Activated naive CD4-positive, alpha-beta T cell treated with anti-CD3 and anti-CD28 coated beads for 36 hours (primary cell): ENCODE measurements at regions of chr5 and their contacts with region 1.

Region 1: DNA sequence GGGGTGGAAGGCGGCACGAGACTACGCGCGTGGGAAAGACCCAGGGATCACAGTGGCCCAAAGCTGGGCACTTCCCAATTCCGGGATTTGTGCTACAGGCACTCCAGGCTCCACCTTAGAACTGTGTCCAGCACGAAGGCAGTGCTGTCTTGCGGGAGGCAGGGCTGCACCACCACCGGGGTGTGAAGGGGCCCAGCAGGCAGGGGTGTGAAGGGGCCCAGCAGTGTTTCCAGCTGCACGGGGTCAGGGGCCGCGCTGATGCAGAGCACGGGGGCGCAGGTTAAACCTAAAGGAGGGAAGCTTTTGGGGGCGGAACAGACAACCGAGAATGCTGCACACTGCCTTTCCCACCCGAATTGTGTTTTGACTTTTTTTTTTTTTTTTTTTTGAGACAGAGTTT is 1.1 kb upstream of the PDCD6 start:
- DNase-seq: no peak
- H3K4me3 Mint-ChIP-seq: peak overlapping the region; percentile 88
- H3K27ac Mint-ChIP-seq: peak overlapping the region; percentile 69
- H3K4me1 Mint-ChIP-seq: peaks cover 38% of the 10 kb centered on the region
- H3K27me3 Mint-ChIP-seq: no peaks in the 10 kb centered on the region

Region 2: DNA sequence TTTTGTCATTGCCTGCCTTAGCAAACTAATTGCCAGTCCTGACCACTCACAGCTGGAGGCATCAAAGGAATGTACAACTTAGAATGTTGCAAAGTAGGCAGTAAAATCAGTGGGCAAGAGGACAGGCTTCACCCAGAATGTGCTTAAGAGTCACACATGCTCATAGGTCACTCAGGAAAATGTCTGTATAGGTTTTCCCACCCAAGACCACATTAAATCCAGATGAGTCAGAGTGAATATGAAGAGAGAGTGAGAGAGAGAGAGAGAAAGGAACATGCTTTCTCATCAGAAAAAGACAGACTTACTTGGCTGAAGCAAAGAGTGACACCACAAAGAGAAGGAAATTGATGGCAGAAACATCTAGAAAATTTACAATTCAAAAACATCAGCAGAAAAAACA is 140.5 kb before region 1 on chr5:
- CTCF ChIA-PET with region 1: no interaction called
- intact Hi-C with region 1: no loop called
- DNase-seq: no peak
- H3K4me3 Mint-ChIP-seq: no peak overlapping the region
- H3K27ac Mint-ChIP-seq: no peak overlapping the region
- H3K4me1 Mint-ChIP-seq: no peaks in the 10 kb centered on the region
- H3K27me3 Mint-ChIP-seq: peaks cover 15% of the 10 kb centered on the region

Region 3: DNA sequence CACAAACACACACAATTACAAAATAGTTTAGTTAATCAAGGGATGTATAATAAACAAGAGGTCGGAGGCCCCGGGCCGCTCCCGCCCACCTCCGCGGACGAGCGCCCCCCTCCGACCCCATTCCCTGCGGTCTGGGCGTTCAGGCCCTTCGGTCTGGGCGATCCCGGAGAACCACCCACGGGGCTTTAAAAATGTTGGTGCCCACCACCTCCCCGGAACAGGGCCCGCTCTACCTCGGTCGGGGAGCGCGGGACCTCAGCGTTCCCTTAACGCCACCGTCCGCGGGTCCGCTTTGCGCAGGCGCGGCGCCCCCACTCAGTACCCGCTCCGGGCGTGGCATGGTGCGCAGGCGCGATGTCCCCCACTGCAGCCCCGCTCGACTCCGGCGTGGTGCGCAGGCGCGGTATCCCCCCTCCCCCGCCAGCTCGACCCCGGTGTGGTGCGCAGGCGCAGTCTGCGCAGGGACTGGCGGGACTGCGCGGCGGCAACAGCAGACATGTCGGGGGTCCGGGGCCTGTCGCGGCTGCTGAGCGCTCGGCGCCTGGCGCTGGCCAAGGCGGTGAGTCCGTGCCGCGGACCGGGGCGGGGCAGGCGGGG is 52.4 kb before region 1 on chr5 and contains the starts of genes CCDC127 and SDHA:
- CTCF ChIA-PET with region 1: no interaction called
- intact Hi-C with region 1: loop called (anchors 1 kb)
- DNase-seq: peak; percentile 94
- H3K4me3 Mint-ChIP-seq: peak within 1 kb of the TSS; percentile 92
- H3K27ac Mint-ChIP-seq: peak within 1 kb of the TSS; percentile 86
- H3K4me1 Mint-ChIP-seq: peaks cover 60% of the 10 kb centered on the region
- H3K27me3 Mint-ChIP-seq: no peaks in the 10 kb centered on the region
- total RNA-seq, gene CCDC127: 3.6 to 4.0 TPM
- total RNA-seq, gene SDHA: 133 to 136 TPM

Region 4: GRCh38 chr5:234450-234849 is 35.9 kb before region 1 on chr5:
- CTCF ChIA-PET with region 1: no interaction called
- intact Hi-C with region 1: no loop called
- DNase-seq: no peak
- H3K4me3 Mint-ChIP-seq: no peak overlapping the region
- H3K27ac Mint-ChIP-seq: no peak overlapping the region
- H3K4me1 Mint-ChIP-seq: no peaks in the 10 kb centered on the region
- H3K27me3 Mint-ChIP-seq: no peaks in the 10 kb centered on the region

Region 5: DNA sequence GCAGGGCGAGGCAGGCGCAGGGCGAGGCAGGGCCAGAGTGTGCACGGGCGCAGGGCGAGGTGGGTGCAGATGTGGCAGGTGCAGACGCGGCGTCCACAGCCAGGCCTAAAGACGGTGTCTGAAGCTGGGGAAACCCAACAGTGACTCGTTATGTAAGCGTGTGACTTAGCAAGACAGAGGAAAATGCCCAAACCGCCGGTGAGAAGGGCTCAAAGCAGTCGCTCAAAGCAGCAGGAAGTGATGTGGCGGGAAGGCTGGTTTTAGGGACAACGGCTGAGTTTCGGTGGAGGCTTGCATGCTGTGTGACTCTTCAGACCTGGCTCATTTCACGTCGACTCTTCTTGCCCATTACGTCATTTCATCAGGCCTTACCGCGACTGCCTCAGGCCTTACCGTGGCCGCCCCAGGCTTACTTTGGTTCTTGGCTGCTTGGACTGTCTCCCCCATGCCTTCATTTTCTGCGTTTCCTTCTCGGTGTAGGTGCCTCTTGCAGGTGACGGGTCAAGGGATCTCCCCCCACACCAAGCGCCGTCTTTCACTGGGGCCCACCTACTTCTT is 122.2 kb after region 1 on chr5:
- CTCF ChIA-PET with region 1: no interaction called
- intact Hi-C with region 1: loop called (anchors 2 kb)
- DNase-seq: peak; percentile 96
- H3K4me3 Mint-ChIP-seq: peak overlapping the region; percentile 69
- H3K27ac Mint-ChIP-seq: peak overlapping the region; percentile 91
- H3K4me1 Mint-ChIP-seq: peaks cover 27% of the 10 kb centered on the region
- H3K27me3 Mint-ChIP-seq: no peaks in the 10 kb centered on the region

Region 6: DNA sequence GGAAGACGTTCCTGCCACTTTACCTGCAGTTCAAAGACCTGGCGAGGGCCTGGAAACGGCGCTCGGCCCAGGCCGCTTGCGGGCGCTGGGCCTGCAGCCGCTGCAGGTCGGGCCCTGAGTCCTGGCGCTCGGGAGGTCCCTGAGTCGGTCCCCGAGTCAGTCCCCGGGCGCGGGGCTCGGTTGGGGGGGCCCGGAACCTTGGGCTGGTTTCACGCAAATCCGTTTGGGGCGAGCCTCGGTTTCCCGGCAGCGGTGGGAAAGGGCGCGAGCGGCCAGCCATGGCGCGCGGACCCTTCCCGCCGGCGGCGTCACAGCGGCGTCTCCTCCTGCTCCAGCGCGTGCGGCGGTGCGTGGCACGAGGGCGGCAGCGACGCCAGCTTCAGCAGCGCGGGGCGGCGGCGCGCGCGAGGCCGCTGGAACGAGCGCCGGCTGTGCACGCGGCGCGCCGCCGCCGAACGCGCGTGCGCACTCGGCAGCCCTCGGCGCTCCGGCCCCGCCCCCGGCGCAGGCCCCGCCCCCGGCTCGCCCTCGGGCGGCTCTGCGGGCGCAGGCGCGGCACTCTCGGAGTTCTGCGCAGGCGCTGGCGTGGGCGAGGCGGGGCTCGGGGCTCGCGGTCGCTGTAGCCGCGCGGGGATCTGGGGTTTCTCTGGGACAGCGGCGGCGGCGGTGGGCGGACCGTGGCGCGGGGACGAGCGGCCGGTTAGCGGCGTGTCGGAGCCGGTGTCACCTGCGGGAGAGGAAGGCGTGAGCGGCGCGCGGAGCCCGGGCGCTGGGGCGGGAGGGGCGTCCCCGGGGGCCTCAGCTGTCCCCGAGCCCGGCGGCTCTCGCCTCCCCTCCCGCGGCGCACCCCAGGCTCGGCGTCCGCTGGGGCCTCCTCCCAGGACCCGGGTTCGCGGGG is 202.6 kb after region 1 on chr5:
- CTCF ChIA-PET with region 1: no interaction called
- intact Hi-C with region 1: no loop called
- DNase-seq: peak; percentile 86
- H3K4me3 Mint-ChIP-seq: peak overlapping the region; percentile 78
- H3K27ac Mint-ChIP-seq: peak overlapping the region; percentile 81
- H3K4me1 Mint-ChIP-seq: peaks cover 28% of the 10 kb centered on the region
- H3K27me3 Mint-ChIP-seq: peaks cover 2% of the 10 kb centered on the region

Region 7: DNA sequence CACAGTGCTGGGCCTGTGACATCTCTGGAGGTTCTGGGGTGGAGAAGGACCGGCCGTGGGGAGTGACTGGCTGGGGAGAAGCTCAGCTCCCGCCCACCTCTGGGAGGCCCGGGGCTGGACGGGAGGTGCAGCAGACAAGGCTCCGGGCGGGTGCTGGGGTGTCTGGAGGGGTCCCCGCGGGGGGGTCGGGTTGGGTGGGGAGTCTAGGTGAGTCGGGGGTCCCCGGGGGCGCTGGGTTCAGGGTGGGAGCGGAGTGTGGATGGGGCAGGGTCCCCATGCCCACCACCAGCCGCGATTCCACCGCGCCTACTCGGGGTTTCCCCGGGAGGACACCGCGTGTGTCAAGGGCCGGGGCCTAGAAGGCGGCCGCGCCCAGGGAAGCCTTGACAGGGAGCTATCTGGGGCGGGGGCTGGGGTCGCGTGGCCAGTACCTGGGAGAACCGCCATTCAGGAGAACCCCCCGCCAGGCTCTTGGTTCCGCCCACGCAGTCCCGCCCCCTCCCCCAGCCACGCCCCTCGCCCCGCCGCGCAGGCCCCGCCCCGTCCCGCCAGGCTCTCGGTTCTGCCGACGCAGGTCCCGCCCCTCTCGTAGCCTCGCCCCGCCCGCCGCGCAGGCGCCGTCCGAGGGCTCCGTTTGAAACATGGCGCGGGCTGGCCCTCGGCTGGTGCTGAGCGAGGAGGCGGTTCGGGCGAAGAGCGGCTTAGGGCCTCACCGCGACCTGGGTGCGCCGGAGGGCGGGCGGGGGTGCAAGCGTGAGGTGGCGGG is 341.6 kb after region 1 on chr5 and contains the start of gene CEP72:
- CTCF ChIA-PET with region 1: no interaction called
- intact Hi-C with region 1: loop called (anchors 5 kb)
- DNase-seq: peak; percentile 94
- H3K4me3 Mint-ChIP-seq: peak within 1 kb of the TSS; percentile 93
- H3K27ac Mint-ChIP-seq: peak within 1 kb of the TSS; percentile 74
- H3K4me1 Mint-ChIP-seq: peaks cover 51% of the 10 kb centered on the region
- H3K27me3 Mint-ChIP-seq: peaks cover 8% of the 10 kb centered on the region
- total RNA-seq, gene CEP72: 18.3 to 18.8 TPM

Region 8: GRCh38 chr5:1633605-1634336 is 1363.4 kb after region 1 on chr5:
- CTCF ChIA-PET with region 1: no interaction called
- intact Hi-C with region 1: loop called (anchors 5 kb)
- DNase-seq: peak; percentile 80
- H3K4me3 Mint-ChIP-seq: peak overlapping the region; percentile 92
- H3K27ac Mint-ChIP-seq: peak overlapping the region; percentile 91
- H3K4me1 Mint-ChIP-seq: peaks cover 27% of the 10 kb centered on the region
- H3K27me3 Mint-ChIP-seq: no peaks in the 10 kb centered on the region